Pancreas (tissue), 10 donors: ENCODE measurements at regions of chr2 and their contacts with region 1.

Region 1: GRCh38 chr2:75403991-75404428 is 156.7 kb downstream of the EVA1A start:
- DNase-seq: no peak
- ATAC-seq: peak; percentile 46 to 86 (median 83)
- H3K4me3 ChIP-seq: no peak overlapping the region
- H3K27ac ChIP-seq: no peak overlapping the region
- H3K4me1 ChIP-seq: no peaks in the 10 kb centered on the region
- H3K27me3 ChIP-seq: peaks cover 0 to 5% (median 0%) of the 10 kb centered on the region in 4 donors
- CTCF ChIP-seq: peak; percentile 18 to 71 (median 50)

Region 2: GRCh38 chr2:74919827-74920226 is 484.2 kb before region 1 on chr2:
- intact Hi-C with region 1: loop called in 1 of 3 experiments (anchors 10 kb)
- DNase-seq: peak; percentile 17 to 91 (median 66)
- ATAC-seq: peak; percentile 70 to 93 (median 82)
- H3K4me3 ChIP-seq: peak overlapping the region in 1 of 4 donors; percentile 40
- H3K27ac ChIP-seq: no peak overlapping the region
- H3K4me1 ChIP-seq: no peaks in the 10 kb centered on the region
- H3K27me3 ChIP-seq: no peaks in the 10 kb centered on the region
- CTCF ChIP-seq: peak; percentile 64 to 78 (median 74)

Region 3: GRCh38 chr2:75053484-75054112 is 350.4 kb before region 1 on chr2:
- intact Hi-C with region 1: loop called in 1 of 3 experiments (anchors 10 kb)
- DNase-seq: peak in 4 of 6 donors; percentile 10 to 39 (median 20)
- ATAC-seq: peak; percentile 67 to 89 (median 88)
- H3K4me3 ChIP-seq: no peak overlapping the region
- H3K27ac ChIP-seq: no peak overlapping the region
- H3K4me1 ChIP-seq: no peaks in the 10 kb centered on the region
- H3K27me3 ChIP-seq: no peaks in the 10 kb centered on the region
- CTCF ChIP-seq: peak; percentile 23 to 57 (median 42)

Region 4: GRCh38 chr2:75064691-75065396 is 339.2 kb before region 1 on chr2:
- intact Hi-C with region 1: loop called in 1 of 3 experiments (anchors 10 kb)
- DNase-seq: peak; percentile 24 to 85 (median 61)
- ATAC-seq: peak; percentile 67 to 86 (median 80)
- H3K4me3 ChIP-seq: no peak overlapping the region
- H3K27ac ChIP-seq: no peak overlapping the region
- H3K4me1 ChIP-seq: peaks cover 0 to 7% (median 0%) of the 10 kb centered on the region in 3 donors
- H3K27me3 ChIP-seq: no peaks in the 10 kb centered on the region
- CTCF ChIP-seq: peak; percentile 65 to 84 (median 73)